ENCODE measurements at regions of chr2 and their contacts with region 1.

Region 1: GRCh38 chr2:192719629-192720028 is 524.9 kb upstream of the TMEFF2 start:
- DNase-seq: no peak
- H3K4me3 ChIP-seq: no peak overlapping the region
- H3K27ac ChIP-seq: no peak overlapping the region
- H3K4me1 ChIP-seq: no peaks in the 10 kb centered on the region
- H3K27me3 ChIP-seq: no peaks in the 10 kb centered on the region
- CTCF ChIP-seq: no peak
- POLR2A ChIP-seq: no peak

Region 2: GRCh38 chr2:191566344-191566743 is 1153.3 kb before region 1 on chr2:
- intact Hi-C with region 1: no loop called
- DNase-seq: peak in 1 of 2 donors; percentile 27
- H3K4me3 ChIP-seq: no peak overlapping the region
- H3K27ac ChIP-seq: no peak overlapping the region
- H3K4me1 ChIP-seq: no peaks in the 10 kb centered on the region
- H3K27me3 ChIP-seq: no peaks in the 10 kb centered on the region
- CTCF ChIP-seq: peak; percentile 50 to 65 (median 56)
- POLR2A ChIP-seq: no peak

Region 3: GRCh38 chr2:192390401-192390800 is 329.2 kb before region 1 on chr2:
- intact Hi-C with region 1: loop called (anchors 5 kb)
- DNase-seq: no peak
- H3K4me3 ChIP-seq: no peak overlapping the region
- H3K27ac ChIP-seq: no peak overlapping the region
- H3K4me1 ChIP-seq: no peaks in the 10 kb centered on the region
- H3K27me3 ChIP-seq: no peaks in the 10 kb centered on the region
- CTCF ChIP-seq: no peak
- POLR2A ChIP-seq: no peak